ENCODE measurements at regions of chr16 and their contacts with region 1.

Region 1: DNA sequence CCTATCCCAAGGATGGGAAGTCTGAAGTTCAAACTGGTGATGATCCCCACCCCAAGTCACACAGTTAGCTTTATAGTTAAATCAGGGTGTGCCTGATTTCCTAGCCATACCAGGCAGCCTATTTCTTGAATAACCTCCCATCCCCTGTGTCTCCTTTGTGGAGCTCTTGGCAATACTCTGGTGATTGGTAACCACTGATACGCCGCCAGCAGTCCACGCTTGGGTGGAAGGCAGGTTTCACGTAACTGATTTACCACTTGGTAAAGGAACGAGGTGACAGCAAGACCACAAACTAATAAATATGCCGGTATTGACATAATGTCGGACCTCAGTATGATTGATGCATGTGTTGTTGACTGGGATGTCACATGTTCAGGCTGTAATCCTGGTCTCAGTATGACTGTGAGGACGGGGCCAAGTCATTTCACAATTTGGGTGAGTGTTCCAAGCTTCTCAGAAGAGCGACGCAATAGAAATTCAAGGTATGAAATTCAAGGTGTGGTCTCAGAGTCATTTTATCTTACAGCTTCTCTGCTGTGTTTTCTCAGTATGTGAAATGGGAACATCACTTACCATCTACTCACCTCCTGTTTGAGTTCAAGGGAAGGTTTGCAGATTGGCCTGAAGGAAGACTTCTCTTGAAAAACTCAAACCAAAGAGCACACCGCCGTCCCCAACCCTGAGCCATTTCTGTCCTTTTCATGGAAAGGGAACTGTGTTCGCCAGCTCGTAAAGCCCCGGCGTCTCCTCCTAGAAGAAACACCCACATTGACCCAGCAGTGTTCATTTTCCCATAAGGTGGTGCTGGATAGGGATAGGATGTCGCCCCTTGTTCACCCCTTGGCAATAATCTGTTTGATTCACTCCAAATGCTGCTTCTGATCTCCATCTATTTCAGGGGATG is 678.9 kb downstream of the WWOX start:
- DNase-seq: peak; percentile 87
- H3K4me3 Mint-ChIP-seq: peak overlapping the region; percentile 63
- H3K27ac Mint-ChIP-seq: peak overlapping the region; percentile 94
- H3K4me1 Mint-ChIP-seq: peaks cover 53% of the 10 kb centered on the region
- H3K27me3 Mint-ChIP-seq: no peaks in the 10 kb centered on the region

Region 2: GRCh38 chr16:78742501-78743283 is 35.7 kb before region 1 on chr16:
- intact Hi-C with region 1: loop called (anchors 1 kb)
- DNase-seq: peak; percentile 91
- H3K4me3 Mint-ChIP-seq: peak overlapping the region; percentile 66
- H3K27ac Mint-ChIP-seq: peak overlapping the region; percentile 87
- H3K4me1 Mint-ChIP-seq: peaks cover 18% of the 10 kb centered on the region
- H3K27me3 Mint-ChIP-seq: no peaks in the 10 kb centered on the region

Region 3: GRCh38 chr16:78794581-78795250 is 16.4 kb after region 1 on chr16:
- intact Hi-C with region 1: loop called (anchors 1 kb)
- DNase-seq: peak; percentile 58
- H3K4me3 Mint-ChIP-seq: no peak overlapping the region
- H3K27ac Mint-ChIP-seq: peak overlapping the region; percentile 5
- H3K4me1 Mint-ChIP-seq: peaks cover 25% of the 10 kb centered on the region
- H3K27me3 Mint-ChIP-seq: no peaks in the 10 kb centered on the region

Region 4: GRCh38 chr16:78844682-78845081 is 66.3 kb after region 1 on chr16:
- intact Hi-C with region 1: no loop called
- DNase-seq: no peak
- H3K4me3 Mint-ChIP-seq: no peak overlapping the region
- H3K27ac Mint-ChIP-seq: no peak overlapping the region
- H3K4me1 Mint-ChIP-seq: no peaks in the 10 kb centered on the region
- H3K27me3 Mint-ChIP-seq: no peaks in the 10 kb centered on the region

Region 5: DNA sequence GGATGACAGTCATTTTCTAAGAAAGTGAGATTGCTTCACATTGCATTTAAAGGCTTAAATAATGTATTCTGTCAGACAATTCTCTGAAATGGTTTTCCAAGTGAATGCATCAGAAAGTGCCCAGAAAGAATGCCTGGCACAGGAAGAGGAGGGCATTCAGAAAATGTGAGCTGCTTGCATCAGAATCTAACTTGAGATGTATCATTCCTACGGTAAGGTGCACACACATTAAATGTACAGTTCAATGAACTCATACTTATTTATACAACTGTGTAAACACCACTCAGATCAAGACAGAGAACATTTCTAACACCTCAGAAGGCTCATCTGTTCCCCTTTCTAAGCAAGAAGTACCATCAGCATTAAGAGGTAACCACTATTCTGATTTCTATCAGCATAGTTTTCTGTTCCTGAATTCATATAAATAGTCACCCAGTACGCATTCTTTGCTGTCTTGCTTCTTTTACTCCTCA is 184.1 kb after region 1 on chr16:
- intact Hi-C with region 1: loop called (anchors 1 kb)
- DNase-seq: no peak
- H3K4me3 Mint-ChIP-seq: no peak overlapping the region
- H3K27ac Mint-ChIP-seq: peak overlapping the region; percentile 46
- H3K4me1 Mint-ChIP-seq: peaks cover 8% of the 10 kb centered on the region
- H3K27me3 Mint-ChIP-seq: no peaks in the 10 kb centered on the region

Region 6: DNA sequence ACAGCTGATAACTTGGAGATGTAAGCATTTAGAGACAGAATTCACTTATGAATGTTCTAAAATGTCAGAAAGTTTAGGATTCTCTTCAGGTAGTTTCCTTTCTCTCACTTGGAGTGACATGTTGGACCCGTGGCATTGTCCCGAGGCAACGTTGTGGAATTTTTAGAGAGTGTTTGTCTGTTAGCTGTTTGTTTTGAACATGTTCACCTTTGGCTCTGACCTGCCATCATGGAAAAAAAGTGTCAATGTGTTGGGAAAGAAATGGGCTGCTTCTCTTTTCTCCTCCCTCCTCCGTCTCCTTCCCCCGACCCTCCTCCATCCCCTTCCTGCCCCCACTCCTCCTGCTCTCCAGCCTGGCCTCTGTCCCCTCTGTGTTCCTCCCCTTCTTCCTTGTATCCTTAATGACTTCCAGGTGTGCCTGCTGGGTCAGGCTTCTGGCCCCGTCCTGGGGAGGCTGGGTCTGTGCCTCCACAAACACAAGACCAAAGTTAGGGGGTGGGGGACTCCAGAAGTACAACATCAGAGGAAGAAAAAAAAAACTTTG is 359.1 kb after region 1 on chr16:
- intact Hi-C with region 1: no loop called
- DNase-seq: no peak
- H3K4me3 Mint-ChIP-seq: no peak overlapping the region
- H3K27ac Mint-ChIP-seq: no peak overlapping the region
- H3K4me1 Mint-ChIP-seq: no peaks in the 10 kb centered on the region
- H3K27me3 Mint-ChIP-seq: no peaks in the 10 kb centered on the region

Region 7: GRCh38 chr16:79269211-79269863 is 491.0 kb after region 1 on chr16:
- intact Hi-C with region 1: loop called (anchors 1 kb)
- DNase-seq: peak; percentile 88
- H3K4me3 Mint-ChIP-seq: peak overlapping the region; percentile 56
- H3K27ac Mint-ChIP-seq: peak overlapping the region; percentile 86
- H3K4me1 Mint-ChIP-seq: peaks cover 74% of the 10 kb centered on the region
- H3K27me3 Mint-ChIP-seq: peaks cover 9% of the 10 kb centered on the region

Region 8: DNA sequence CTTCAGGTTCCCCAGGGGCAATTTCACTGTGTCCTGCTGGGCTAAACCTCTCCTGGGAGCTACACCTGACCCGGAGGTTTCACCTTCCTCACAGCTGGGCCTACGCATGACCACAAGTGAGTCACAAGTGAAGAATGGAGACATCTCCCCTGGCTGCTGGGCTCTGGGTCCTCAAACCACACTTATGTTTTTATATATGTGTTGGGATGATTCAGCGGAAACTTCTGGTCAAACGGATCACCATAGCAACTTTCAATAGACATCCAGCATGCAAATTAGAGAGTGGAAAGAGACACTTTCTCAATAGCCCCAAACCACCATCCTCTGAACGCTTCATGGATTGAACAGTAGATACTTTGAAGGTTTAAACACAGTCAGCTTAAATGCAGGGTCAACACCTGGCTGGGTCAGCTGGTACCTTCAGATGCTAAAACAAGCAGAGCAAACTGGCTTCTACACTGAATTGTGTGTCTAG is 850.2 kb after region 1 on chr16:
- intact Hi-C with region 1: loop called (anchors 1 kb)
- DNase-seq: peak; percentile 91
- H3K4me3 Mint-ChIP-seq: peak overlapping the region; percentile 70
- H3K27ac Mint-ChIP-seq: peak overlapping the region; percentile 88
- H3K4me1 Mint-ChIP-seq: peaks cover 57% of the 10 kb centered on the region
- H3K27me3 Mint-ChIP-seq: peaks cover 15% of the 10 kb centered on the region